Activated CD4-positive, alpha-beta memory T cell treated with anti-CD3 and anti-CD28 coated beads for 36 hours (primary cell): ENCODE measurements at regions of chr12 and their contacts with region 1.

Region 1: GRCh38 chr12:1939801-1940607 is 21.6 kb upstream of the CACNA2D4 start:
- DNase-seq: peak; percentile 91
- H3K4me3 Mint-ChIP-seq: no peak overlapping the region
- H3K27ac Mint-ChIP-seq: no peak overlapping the region
- H3K4me1 Mint-ChIP-seq: peaks cover 4% of the 10 kb centered on the region
- H3K27me3 Mint-ChIP-seq: no peaks in the 10 kb centered on the region

Region 2: GRCh38 chr12:1634590-1635191 is 305.3 kb before region 1 on chr12:
- CTCF ChIA-PET with region 1: interaction called, 47 read pairs
- POLR2A ChIA-PET with region 1: no interaction called
- intact Hi-C with region 1: no loop called
- DNase-seq: peak; percentile 75
- H3K4me3 Mint-ChIP-seq: no peak overlapping the region
- H3K27ac Mint-ChIP-seq: no peak overlapping the region
- H3K4me1 Mint-ChIP-seq: peaks cover 9% of the 10 kb centered on the region
- H3K27me3 Mint-ChIP-seq: peaks cover 48% of the 10 kb centered on the region

Region 3: DNA sequence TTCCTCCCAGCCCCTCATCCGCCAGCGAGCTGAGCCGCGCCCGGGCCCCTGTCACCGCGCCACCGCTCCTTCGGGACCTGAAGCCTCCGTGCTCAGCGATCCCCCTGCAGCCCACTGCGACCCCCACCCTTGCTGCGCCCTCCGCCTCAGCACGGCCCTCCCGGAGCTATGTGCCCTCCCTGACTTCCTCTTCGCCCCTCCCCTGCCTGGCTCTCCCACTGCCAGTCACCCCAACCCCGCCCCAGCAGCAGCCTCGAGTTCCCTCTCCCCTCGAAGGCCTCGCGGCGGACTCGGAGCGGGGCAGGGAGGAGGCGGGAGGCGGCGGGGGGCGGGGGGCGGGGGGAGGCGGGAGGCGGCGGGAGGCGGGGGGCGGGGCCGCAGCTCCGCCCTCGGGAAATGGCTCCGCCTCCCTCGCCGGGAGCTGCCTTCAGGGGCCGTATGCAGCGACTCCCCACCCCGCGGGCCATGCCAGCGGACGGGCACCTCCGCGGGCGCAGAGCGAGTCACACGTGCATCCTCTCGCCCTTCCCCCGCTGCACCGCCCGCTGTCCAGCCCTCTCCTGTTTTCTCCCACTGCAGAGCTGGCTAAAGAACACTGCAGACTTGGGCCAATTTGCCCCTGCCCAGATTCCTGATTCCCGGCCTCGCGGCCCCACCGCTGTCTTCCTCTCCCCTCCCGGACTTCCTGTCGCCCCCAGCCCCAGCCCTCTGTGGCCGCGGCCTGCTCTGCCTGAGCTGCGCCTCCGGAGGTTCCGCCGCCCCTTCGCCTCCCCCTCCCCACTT is 278.3 kb before region 1 on chr12:
- CTCF ChIA-PET with region 1: interaction called, 14 read pairs
- POLR2A ChIA-PET with region 1: no interaction called
- intact Hi-C with region 1: no loop called
- DNase-seq: peak; percentile 91
- H3K4me3 Mint-ChIP-seq: peak overlapping the region; percentile 73
- H3K27ac Mint-ChIP-seq: peak overlapping the region; percentile 64
- H3K4me1 Mint-ChIP-seq: peaks cover 29% of the 10 kb centered on the region
- H3K27me3 Mint-ChIP-seq: no peaks in the 10 kb centered on the region

Region 4: DNA sequence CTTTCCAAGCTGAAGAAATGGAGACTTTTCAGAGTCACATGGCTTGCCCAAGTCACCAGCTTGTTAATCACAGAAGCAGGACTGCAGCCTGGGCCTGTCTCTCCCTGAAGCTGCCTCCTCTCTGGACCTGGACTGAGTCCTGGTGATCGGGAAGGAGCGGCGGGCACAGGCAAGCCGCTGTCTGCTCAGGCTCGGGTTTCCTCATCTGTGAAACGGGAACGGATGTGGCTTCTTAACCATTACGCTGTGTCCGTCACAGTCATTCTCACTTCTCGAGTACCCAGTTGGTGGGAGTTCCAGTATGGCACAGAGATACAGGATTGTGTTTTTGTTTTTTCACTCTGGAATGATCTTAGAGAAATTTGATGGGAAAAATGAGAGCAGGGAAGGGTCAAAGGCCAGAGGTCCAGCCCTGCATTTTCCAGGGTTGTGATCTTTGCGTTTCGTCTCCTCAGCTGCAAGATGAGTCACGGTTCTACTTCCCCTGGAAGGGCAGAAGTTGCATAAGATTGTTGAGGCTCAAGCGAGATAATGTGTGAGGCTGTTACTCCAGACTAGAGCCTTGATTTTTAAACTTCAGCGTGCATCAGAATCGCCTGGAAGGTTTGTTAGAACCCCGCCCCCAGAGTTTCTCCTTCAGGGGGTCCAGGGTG is 127.2 kb before region 1 on chr12:
- CTCF ChIA-PET with region 1: interaction called, 10 read pairs
- POLR2A ChIA-PET with region 1: no interaction called
- intact Hi-C with region 1: no loop called
- DNase-seq: no peak
- H3K4me3 Mint-ChIP-seq: no peak overlapping the region
- H3K27ac Mint-ChIP-seq: no peak overlapping the region
- H3K4me1 Mint-ChIP-seq: peaks cover 7% of the 10 kb centered on the region
- H3K27me3 Mint-ChIP-seq: peaks cover 2% of the 10 kb centered on the region

Region 5: GRCh38 chr12:2004113-2004929 is 64.3 kb after region 1 on chr12 and contains the start of gene DCP1B:
- CTCF ChIA-PET with region 1: interaction called, 10 read pairs
- POLR2A ChIA-PET with region 1: no interaction called
- intact Hi-C with region 1: no loop called
- DNase-seq: peak; percentile 98
- H3K4me3 Mint-ChIP-seq: peak within 1 kb of the TSS; percentile 100
- H3K27ac Mint-ChIP-seq: peak within 1 kb of the TSS; percentile 97
- H3K4me1 Mint-ChIP-seq: peaks cover 31% of the 10 kb centered on the region
- H3K27me3 Mint-ChIP-seq: no peaks in the 10 kb centered on the region
- total RNA-seq, gene DCP1B: 13.1 to 13.4 TPM

Region 6: DNA sequence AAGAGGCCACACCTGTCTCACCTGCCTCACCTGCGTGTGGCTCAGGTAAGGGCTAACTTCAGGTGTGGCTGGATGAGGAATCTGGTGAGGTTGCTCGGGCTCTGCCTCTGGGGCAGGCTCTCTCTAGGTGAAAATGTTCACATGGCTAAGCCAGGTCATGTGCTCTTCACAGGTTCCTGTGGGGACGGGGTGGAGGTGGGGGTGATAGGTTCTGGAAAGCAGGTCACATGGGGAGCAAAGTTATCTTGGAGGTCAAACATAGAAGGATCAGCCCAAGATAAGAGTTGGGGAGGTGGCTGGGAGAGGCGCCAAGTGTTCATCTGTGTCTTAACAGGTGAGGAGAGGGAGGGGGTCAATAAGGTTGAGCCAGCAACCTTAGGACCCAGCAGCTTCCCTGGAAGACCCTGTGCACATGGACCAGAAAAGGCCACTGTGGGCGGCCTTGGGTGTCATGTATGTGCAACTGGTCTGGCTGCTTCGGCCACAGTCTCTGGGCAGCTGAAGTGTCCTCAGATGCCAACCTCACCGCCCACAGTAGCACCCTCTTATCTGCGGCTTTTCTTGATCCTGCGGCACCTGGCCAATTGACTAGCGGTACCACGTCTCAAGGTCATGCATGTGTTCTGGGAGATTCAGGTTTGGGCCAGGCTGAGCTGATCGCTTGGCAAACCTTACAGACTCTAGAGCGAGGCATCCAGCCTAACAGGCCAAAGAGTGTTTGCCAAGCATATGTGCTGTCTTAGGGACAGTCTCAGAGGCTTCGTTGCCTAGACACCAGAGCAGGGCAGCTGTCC is 173.3 kb after region 1 on chr12:
- CTCF ChIA-PET with region 1: no interaction called
- POLR2A ChIA-PET with region 1: no interaction called
- intact Hi-C with region 1: no loop called
- DNase-seq: no peak
- H3K4me3 Mint-ChIP-seq: no peak overlapping the region
- H3K27ac Mint-ChIP-seq: no peak overlapping the region
- H3K4me1 Mint-ChIP-seq: no peaks in the 10 kb centered on the region
- H3K27me3 Mint-ChIP-seq: no peaks in the 10 kb centered on the region